ENCODE measurements at regions of chr16 and their contacts with region 1.

Region 1: DNA sequence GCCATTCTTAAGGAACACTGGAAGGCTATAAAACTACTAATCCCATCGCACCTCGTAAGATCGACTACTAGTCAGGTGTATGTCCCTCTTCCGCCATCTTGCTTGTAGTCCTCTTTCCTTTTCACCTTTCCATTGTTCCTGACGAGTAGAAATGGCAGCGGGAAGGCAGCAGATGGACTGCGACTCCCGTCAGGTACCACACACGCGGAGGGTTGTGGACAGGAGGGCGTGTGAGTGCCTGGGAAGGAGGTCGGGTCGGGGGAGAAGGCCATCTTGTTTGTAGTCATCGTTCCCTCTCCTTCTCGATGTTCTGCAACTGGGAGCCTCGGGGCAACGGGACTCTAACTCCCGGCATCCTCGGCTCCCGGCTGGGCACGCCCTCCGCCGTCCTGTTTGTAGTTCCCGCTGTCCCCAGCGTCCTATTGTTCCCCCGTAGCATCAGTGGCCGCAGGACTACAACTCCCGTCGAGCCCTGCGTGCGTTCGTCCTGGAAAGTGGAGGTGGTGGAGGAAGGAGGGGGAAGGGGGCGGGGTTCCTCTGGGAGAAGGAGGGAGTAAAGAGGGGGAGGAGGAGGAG is 324 bp upstream of the FBXL19 start:
- DNase-seq: peak; percentile 98
- ATAC-seq: peak; percentile 76
- H3K4me3 Mint-ChIP-seq: peak overlapping the region; percentile 88
- H3K27ac Mint-ChIP-seq: peak overlapping the region; percentile 100
- H3K4me1 Mint-ChIP-seq: peaks cover 20% of the 10 kb centered on the region
- H3K27me3 Mint-ChIP-seq: no peaks in the 10 kb centered on the region

Region 2: GRCh38 chr16:30650369-30651123 is 272.5 kb before region 1 on chr16 and contains the start of gene PRR14:
- CTCF ChIA-PET with region 1: no interaction called
- POLR2A ChIA-PET with region 1: no interaction called
- intact Hi-C with region 1: loop called (anchors 1 to 2 kb)
- DNase-seq: peak; percentile 100
- ATAC-seq: peak; percentile 82
- H3K4me3 Mint-ChIP-seq: peak within 1 kb of the TSS; percentile 95
- H3K27ac Mint-ChIP-seq: peak within 1 kb of the TSS; percentile 97
- H3K4me1 Mint-ChIP-seq: peaks cover 21% of the 10 kb centered on the region
- H3K27me3 Mint-ChIP-seq: no peaks in the 10 kb centered on the region
- total RNA-seq, gene PRR14: 76.8 to 77.8 TPM

Region 3: DNA sequence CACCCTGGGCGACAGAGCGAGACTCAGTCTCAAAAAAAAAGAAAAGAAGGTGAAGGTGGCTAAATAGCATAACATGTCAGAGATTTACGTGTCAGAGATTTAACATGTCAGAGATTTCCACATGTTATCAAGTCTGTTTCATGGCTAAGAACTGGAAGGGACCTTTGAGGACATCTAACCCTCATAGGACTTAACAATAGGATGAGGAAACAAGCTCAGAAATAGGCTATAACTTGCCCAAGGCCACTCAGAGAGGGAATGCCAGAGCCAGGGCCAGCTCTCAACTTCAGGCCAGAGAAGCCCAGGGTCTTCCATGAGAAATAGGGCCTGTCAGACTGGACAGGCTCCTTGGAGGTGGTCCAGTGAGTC is 109.2 kb before region 1 on chr16:
- CTCF ChIA-PET with region 1: no interaction called
- POLR2A ChIA-PET with region 1: no interaction called
- intact Hi-C with region 1: loop called in 1 of 2 experiments (anchors 1 kb)
- DNase-seq: no peak
- ATAC-seq: peak; percentile 4
- H3K4me3 Mint-ChIP-seq: peak overlapping the region; percentile 87
- H3K27ac Mint-ChIP-seq: peak overlapping the region; percentile 81
- H3K4me1 Mint-ChIP-seq: peaks cover 12% of the 10 kb centered on the region
- H3K27me3 Mint-ChIP-seq: no peaks in the 10 kb centered on the region

Region 4: DNA sequence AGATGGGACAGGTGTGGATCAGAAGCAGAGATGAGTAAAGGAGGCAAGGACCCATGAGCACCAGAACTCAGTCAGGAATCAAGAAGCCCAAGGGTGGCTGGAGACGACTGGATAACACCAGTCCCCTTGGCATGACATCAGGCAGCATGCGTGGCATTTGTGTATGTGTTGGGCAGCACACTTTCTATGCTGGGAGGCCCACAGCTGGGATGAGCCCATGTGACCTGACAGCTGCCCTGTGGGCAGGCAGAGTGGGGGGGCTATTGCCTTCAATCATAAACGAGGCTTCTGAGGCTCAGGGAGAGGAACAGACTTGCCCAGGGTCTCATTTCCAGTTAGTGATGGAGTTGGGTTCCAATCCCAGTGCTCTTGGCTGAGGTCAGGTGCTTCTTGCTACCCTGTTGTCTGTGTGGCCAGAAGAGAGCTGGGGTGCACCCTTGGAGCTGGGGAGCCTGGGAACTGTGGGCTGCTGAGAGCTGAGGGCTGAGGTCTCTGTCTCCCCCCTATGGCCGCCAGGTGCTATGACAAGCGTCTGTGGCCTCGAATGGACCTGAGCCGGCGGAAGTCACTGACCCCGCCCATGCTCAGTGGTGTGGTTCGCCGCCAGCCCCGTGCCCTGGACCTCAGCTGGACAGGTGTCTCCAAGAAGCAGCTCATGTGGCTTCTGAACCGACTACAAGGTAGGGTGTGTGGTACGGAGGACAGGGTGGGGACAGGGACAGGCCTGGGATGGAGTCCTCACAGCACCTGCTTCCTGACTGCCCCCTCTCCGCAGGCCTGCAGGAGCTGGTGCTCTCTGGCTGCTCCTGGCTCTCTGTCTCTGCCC is 18.8 kb after region 1 on chr16:
- CTCF ChIA-PET with region 1: interaction called, 18 read pairs
- POLR2A ChIA-PET with region 1: no interaction called
- intact Hi-C with region 1: loop called in 1 of 2 experiments (anchors 2 kb)
- DNase-seq: peak; percentile 83
- ATAC-seq: peak; percentile 94
- H3K4me3 Mint-ChIP-seq: peak overlapping the region; percentile 35
- H3K27ac Mint-ChIP-seq: peak overlapping the region; percentile 78
- H3K4me1 Mint-ChIP-seq: peaks cover 19% of the 10 kb centered on the region
- H3K27me3 Mint-ChIP-seq: no peaks in the 10 kb centered on the region

Region 5: DNA sequence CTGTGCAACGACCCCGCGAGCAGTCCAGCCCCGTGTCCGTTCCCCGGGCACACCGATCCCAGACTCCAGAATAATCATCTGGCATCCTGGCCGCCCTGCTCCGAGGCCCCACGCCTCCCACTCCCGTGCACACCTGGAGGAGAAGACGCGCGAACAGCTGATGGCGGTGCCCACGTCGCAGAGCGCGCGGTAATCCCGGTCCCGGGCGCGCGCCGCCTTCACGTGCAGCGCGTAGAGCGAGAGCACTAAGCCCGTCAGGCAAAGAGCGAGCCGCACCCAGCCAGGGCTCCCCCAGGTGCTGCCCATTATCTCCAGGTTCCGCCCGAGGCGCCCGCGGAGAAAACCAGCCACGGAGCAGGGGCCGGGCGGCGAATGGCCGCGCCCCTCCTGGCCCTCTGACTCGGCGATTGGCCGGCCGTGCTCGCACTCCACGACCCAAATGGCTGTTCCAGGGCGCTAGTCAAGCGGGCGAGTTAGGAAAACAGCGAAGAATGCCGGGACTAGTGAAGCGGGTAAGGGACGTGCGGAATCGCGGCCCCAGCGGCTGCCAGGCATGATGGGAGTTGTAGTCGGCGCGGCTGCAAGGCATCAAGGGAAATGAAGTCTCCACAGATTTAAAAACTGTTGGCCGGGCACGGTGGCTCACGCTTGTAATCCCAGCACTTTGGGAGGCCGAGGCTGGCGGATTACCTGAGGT is 171.5 kb after region 1 on chr16 and contains the start of gene VKORC1:
- CTCF ChIA-PET with region 1: no interaction called
- POLR2A ChIA-PET with region 1: no interaction called
- intact Hi-C with region 1: loop called (anchors 1 kb)
- DNase-seq: peak; percentile 96
- ATAC-seq: peak; percentile 92
- H3K4me3 Mint-ChIP-seq: peak within 1 kb of the TSS; percentile 98
- H3K27ac Mint-ChIP-seq: peak within 1 kb of the TSS; percentile 89
- H3K4me1 Mint-ChIP-seq: peaks cover 25% of the 10 kb centered on the region
- H3K27me3 Mint-ChIP-seq: no peaks in the 10 kb centered on the region
- total RNA-seq, gene VKORC1: 59.6 to 64.2 TPM

Region 6: GRCh38 chr16:31458844-31459721 is 536.0 kb after region 1 on chr16 and contains the start of gene ARMC5:
- CTCF ChIA-PET with region 1: no interaction called
- POLR2A ChIA-PET with region 1: no interaction called
- intact Hi-C with region 1: loop called in 1 of 2 experiments (anchors 1 kb)
- DNase-seq: peak; percentile 98
- ATAC-seq: peak; percentile 81
- H3K4me3 Mint-ChIP-seq: peak within 1 kb of the TSS; percentile 85
- H3K27ac Mint-ChIP-seq: peak within 1 kb of the TSS; percentile 94
- H3K4me1 Mint-ChIP-seq: peaks cover 42% of the 10 kb centered on the region
- H3K27me3 Mint-ChIP-seq: no peaks in the 10 kb centered on the region
- total RNA-seq, gene ARMC5: 7.0 to 7.9 TPM